ENCODE measurements at regions of chr22 and their contacts with region 1.

Region 1: DNA sequence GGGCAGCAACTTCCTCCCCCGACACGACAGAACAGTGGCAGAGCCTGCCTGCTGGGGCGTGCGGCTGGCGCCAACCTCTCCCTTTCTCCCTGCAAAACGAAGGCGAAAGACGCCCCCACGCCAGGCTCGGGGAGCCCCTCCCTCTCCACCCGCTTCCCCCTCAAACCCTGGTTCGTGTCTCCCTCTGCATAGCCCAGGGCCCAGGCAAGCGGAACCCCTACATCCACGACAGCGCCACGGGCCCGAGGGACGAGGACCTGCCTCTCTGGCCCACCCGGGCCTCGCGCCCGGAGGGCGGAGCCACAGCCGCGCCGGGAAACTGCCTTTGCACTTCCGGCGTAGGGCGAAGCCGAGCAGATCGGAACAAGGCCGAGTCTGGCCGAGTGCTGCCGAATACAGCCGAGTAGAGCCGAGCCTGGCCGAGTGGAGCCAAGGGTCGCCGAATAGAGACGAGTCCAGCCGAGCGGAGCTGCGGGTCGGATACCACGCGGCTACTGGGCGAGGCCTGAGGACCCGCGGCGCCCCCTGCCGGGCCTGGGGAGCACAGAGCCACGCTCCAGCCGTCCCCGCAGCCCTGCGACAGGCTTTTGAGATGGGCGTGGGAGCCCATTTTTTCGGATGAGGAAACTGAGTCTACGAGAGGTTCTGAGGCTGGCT is 11.2 kb upstream of the C1QTNF6 start:
- DNase-seq: peak; percentile 100
- H3K4me3 Mint-ChIP-seq: peak overlapping the region; percentile 83
- H3K27ac Mint-ChIP-seq: peak overlapping the region; percentile 92
- H3K4me1 Mint-ChIP-seq: peaks cover 36% of the 10 kb centered on the region
- H3K27me3 Mint-ChIP-seq: no peaks in the 10 kb centered on the region

Region 2: GRCh38 chr22:37012262-37012904 is 186.8 kb before region 1 on chr22:
- CTCF ChIA-PET with region 1: no interaction called
- POLR2A ChIA-PET with region 1: no interaction called
- DNase-seq: no peak
- H3K4me3 Mint-ChIP-seq: no peak overlapping the region
- H3K27ac Mint-ChIP-seq: no peak overlapping the region
- H3K4me1 Mint-ChIP-seq: no peaks in the 10 kb centered on the region
- H3K27me3 Mint-ChIP-seq: peaks cover 16% of the 10 kb centered on the region

Region 3: GRCh38 chr22:37077884-37078485 is 121.2 kb before region 1 on chr22:
- CTCF ChIA-PET with region 1: interaction called, 45 read pairs
- POLR2A ChIA-PET with region 1: interaction called, 43 read pairs
- DNase-seq: peak; percentile 88
- H3K4me3 Mint-ChIP-seq: peak overlapping the region; percentile 1
- H3K27ac Mint-ChIP-seq: peak overlapping the region; percentile 100
- H3K4me1 Mint-ChIP-seq: peaks cover 69% of the 10 kb centered on the region
- H3K27me3 Mint-ChIP-seq: no peaks in the 10 kb centered on the region

Region 4: GRCh38 chr22:37148742-37149665 is 50.2 kb before region 1 on chr22:
- CTCF ChIA-PET with region 1: interaction called, 51 read pairs
- POLR2A ChIA-PET with region 1: interaction called, 61 read pairs
- DNase-seq: no peak
- H3K4me3 Mint-ChIP-seq: peak overlapping the region; percentile 98
- H3K27ac Mint-ChIP-seq: peak overlapping the region; percentile 89
- H3K4me1 Mint-ChIP-seq: peaks cover 59% of the 10 kb centered on the region
- H3K27me3 Mint-ChIP-seq: no peaks in the 10 kb centered on the region

Region 5: GRCh38 chr22:37210041-37210803 is 11.0 kb after region 1 on chr22:
- CTCF ChIA-PET with region 1: interaction called, 5 read pairs
- POLR2A ChIA-PET with region 1: interaction called, 13 read pairs
- DNase-seq: no peak
- H3K4me3 Mint-ChIP-seq: no peak overlapping the region
- H3K27ac Mint-ChIP-seq: no peak overlapping the region
- H3K4me1 Mint-ChIP-seq: peaks cover 2% of the 10 kb centered on the region
- H3K27me3 Mint-ChIP-seq: no peaks in the 10 kb centered on the region

Region 6: GRCh38 chr22:37229805-37230672 is 30.8 kb after region 1 on chr22:
- CTCF ChIA-PET with region 1: interaction called, 18 read pairs
- POLR2A ChIA-PET with region 1: interaction called, 27 read pairs
- DNase-seq: peak; percentile 94
- H3K4me3 Mint-ChIP-seq: peak overlapping the region; percentile 45
- H3K27ac Mint-ChIP-seq: peak overlapping the region; percentile 97
- H3K4me1 Mint-ChIP-seq: peaks cover 90% of the 10 kb centered on the region
- H3K27me3 Mint-ChIP-seq: no peaks in the 10 kb centered on the region